ENCODE measurements at regions of chr14 and their contacts with region 1.

Region 1: GRCh38 chr14:103104654-103105452 is 10.3 kb downstream of the EXOC3L4 start:
- DNase-seq: peak; percentile 53
- H3K4me3 Mint-ChIP-seq: no peak overlapping the region
- H3K27ac Mint-ChIP-seq: no peak overlapping the region
- H3K4me1 Mint-ChIP-seq: peaks cover 3% of the 10 kb centered on the region
- H3K27me3 Mint-ChIP-seq: peaks cover 23% of the 10 kb centered on the region

Region 2: DNA sequence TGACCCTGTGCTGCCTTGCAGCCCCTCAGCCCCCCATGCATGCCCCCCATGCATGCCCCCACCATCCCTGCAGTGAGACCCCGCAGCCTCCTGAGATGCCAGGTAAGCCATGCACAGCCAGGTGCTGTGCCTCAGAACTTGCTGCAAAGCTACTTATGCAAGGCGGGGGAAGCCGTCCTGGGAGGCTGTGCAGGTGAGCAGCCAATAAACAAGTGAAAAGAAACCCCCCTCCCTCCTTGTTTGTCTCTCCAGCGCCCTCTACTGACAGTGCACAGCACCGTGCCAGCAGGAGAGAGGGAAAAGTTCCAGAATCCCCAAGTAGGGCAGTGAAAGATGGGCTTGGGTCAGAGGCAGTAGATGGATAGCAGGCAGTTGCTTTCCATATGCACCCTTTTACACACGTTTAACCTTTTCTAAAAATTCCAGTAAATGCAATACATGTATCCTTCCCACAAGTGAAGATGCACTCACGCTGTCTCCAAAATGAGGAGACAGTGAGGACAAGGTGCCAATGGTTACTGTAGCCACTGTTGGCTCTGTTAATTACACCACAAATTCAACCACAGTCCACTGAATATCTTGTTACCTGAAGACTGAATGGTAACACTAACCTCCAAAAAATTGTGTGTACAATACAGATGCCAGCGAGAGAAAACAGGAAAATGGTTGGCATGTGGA is 36.4 kb after region 1 on chr14:
- intact Hi-C with region 1: loop called (anchors 1 kb)
- DNase-seq: no peak
- H3K4me3 Mint-ChIP-seq: no peak overlapping the region
- H3K27ac Mint-ChIP-seq: no peak overlapping the region
- H3K4me1 Mint-ChIP-seq: peaks cover 4% of the 10 kb centered on the region
- H3K27me3 Mint-ChIP-seq: peaks cover 3% of the 10 kb centered on the region

Region 3: DNA sequence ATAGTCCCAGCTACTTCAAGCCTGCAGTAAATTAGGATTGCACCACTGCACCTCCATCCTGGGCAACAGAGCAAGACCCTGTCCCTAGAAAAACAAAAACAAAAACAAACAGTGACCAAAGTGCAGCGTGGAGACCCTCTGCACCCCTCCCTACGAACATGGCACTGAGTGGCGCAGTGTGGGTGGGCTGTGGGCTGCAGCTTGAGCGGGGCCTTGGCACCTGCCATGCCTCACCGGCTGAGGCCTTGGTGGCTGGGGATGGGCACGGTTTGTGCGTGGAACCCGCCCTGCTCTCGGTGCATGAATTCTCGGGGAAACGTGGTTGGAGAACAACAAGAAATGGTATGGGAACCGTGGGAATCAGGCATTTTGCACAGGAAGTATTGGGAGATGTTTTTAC is 79.2 kb after region 1 on chr14:
- intact Hi-C with region 1: loop called (anchors 5 kb)
- DNase-seq: no peak
- H3K4me3 Mint-ChIP-seq: no peak overlapping the region
- H3K27ac Mint-ChIP-seq: no peak overlapping the region
- H3K4me1 Mint-ChIP-seq: no peaks in the 10 kb centered on the region
- H3K27me3 Mint-ChIP-seq: peaks cover 40% of the 10 kb centered on the region

Region 4: GRCh38 chr14:103292426-103293374 is 187.8 kb after region 1 on chr14:
- intact Hi-C with region 1: loop called (anchors 2 kb)
- DNase-seq: peak; percentile 54
- H3K4me3 Mint-ChIP-seq: no peak overlapping the region
- H3K27ac Mint-ChIP-seq: no peak overlapping the region
- H3K4me1 Mint-ChIP-seq: peaks cover 3% of the 10 kb centered on the region
- H3K27me3 Mint-ChIP-seq: peaks cover 26% of the 10 kb centered on the region